HCT116 (cell line): ENCODE measurements at regions of chrX and their contacts with region 1.

Region 1: GRCh38 chrX:14029425-14030173 is at the start of gene GEMIN8:
- DNase-seq: peak; percentile 84
- ATAC-seq: peak; percentile 91
- H3K4me3 ChIP-seq: peak within 1 kb of the TSS; percentile 64 to 69
- H3K27ac ChIP-seq: peak within 1 kb of the TSS; percentile 82
- H3K4me1 ChIP-seq: peaks cover 16 to 22% of the 10 kb centered on the region in 2 experiments
- H3K27me3 ChIP-seq: no peaks in the 10 kb centered on the region
- CTCF ChIP-seq: no peak
- POLR2A ChIP-seq: no peak
- RAD21 ChIP-seq: no peak
- total RNA-seq, gene GEMIN8: 11.3 TPM

Region 2: GRCh38 chrX:12701628-12702027 is 1328.0 kb before region 1 on chrX:
- CTCF ChIA-PET with region 1: no interaction called
- POLR2A ChIA-PET with region 1: no interaction called
- RAD21 ChIA-PET with region 1: no interaction called
- intact Hi-C with region 1: loop called (anchors 5 kb)
- DNase-seq: peak; percentile 62
- ATAC-seq: peak; percentile 91
- H3K4me3 ChIP-seq: no peak overlapping the region
- H3K27ac ChIP-seq: no peak overlapping the region
- H3K4me1 ChIP-seq: no peaks in the 10 kb centered on the region
- H3K27me3 ChIP-seq: 0 out of 2 replicates have a peak, but pooled peaks cover 3% of the 10 kb centered on the region
- CTCF ChIP-seq: peak; percentile 42 to 58 (median 52); a peak in 5 of 6 replicates
- POLR2A ChIP-seq: no peak
- RAD21 ChIP-seq: peak; percentile 69

Region 3: GRCh38 chrX:12946838-12947544 is 1082.6 kb before region 1 on chrX:
- CTCF ChIA-PET with region 1: no interaction called
- POLR2A ChIA-PET with region 1: no interaction called
- RAD21 ChIA-PET with region 1: no interaction called
- intact Hi-C with region 1: loop called (anchors 10 kb)
- DNase-seq: peak; percentile 60
- ATAC-seq: peak; percentile 78
- H3K4me3 ChIP-seq: no peak overlapping the region
- H3K27ac ChIP-seq: peak overlapping the region; percentile 37
- H3K4me1 ChIP-seq: peaks cover 9 to 11% of the 10 kb centered on the region in 2 experiments; a peak in 3 of 4 replicates
- H3K27me3 ChIP-seq: no peaks in the 10 kb centered on the region
- CTCF ChIP-seq: peak; percentile 90 to 99 (median 94)
- POLR2A ChIP-seq: no peak
- RAD21 ChIP-seq: peak; percentile 87

Region 4: DNA sequence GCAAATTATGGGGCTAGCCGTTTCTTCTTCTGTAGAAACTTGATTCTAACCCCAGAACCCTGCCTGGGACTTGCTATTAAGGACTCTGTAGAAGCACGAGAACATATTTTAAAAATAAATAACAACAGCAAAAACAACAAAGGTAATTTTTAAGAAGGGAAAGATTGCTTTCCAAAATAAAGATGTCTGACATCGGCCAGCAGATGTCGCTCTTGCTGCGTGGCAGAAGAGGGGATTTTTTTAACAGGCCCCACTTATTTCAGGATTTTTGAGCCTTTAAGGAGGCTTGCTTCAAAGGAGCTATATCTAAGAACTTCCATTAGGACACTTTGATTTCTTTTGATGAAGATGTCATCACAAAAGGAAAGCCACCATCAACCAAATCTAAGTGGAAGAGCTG is 523.0 kb before region 1 on chrX:
- CTCF ChIA-PET with region 1: interaction called, 22 read pairs
- POLR2A ChIA-PET with region 1: interaction called, 3 read pairs
- RAD21 ChIA-PET with region 1: interaction called in 1 of 2 experiments, 4 read pairs
- intact Hi-C with region 1: loop called (anchors 1 kb)
- DNase-seq: peak; percentile 28
- ATAC-seq: no peak
- H3K4me3 ChIP-seq: no peak overlapping the region
- H3K27ac ChIP-seq: no peak overlapping the region
- H3K4me1 ChIP-seq: no peaks in the 10 kb centered on the region
- H3K27me3 ChIP-seq: no peaks in the 10 kb centered on the region
- CTCF ChIP-seq: peak; percentile 51 to 67 (median 65); a peak in 5 of 6 replicates
- POLR2A ChIP-seq: no peak
- RAD21 ChIP-seq: peak; percentile 84

Region 5: GRCh38 chrX:13653022-13653693 is 376.4 kb before region 1 on chrX and contains the start of gene TCEANC:
- CTCF ChIA-PET with region 1: no interaction called
- POLR2A ChIA-PET with region 1: no interaction called
- RAD21 ChIA-PET with region 1: no interaction called
- intact Hi-C with region 1: loop called (anchors 2 kb)
- DNase-seq: peak; percentile 90
- ATAC-seq: peak; percentile 96
- H3K4me3 ChIP-seq: peak within 1 kb of the TSS; percentile 53 to 67
- H3K27ac ChIP-seq: peak within 1 kb of the TSS; percentile 88
- H3K4me1 ChIP-seq: peaks cover 8 to 18% of the 10 kb centered on the region in 2 experiments
- H3K27me3 ChIP-seq: no peaks in the 10 kb centered on the region
- CTCF ChIP-seq: no peak
- POLR2A ChIP-seq: peak; percentile 25
- RAD21 ChIP-seq: no peak
- total RNA-seq, gene TCEANC: 1.2 TPM

Region 6: GRCh38 chrX:13750204-13750603 is 279.4 kb before region 1 on chrX:
- CTCF ChIA-PET with region 1: interaction called, 5 read pairs
- POLR2A ChIA-PET with region 1: interaction called, 3 read pairs
- RAD21 ChIA-PET with region 1: no interaction called
- intact Hi-C with region 1: loop called (anchors 1 kb)
- DNase-seq: peak; percentile 13
- ATAC-seq: peak; percentile 72
- H3K4me3 ChIP-seq: no peak overlapping the region
- H3K27ac ChIP-seq: no peak overlapping the region
- H3K4me1 ChIP-seq: no peaks in the 10 kb centered on the region
- H3K27me3 ChIP-seq: no peaks in the 10 kb centered on the region
- CTCF ChIP-seq: peak; percentile 22 to 53 (median 48); a peak in 4 of 6 replicates
- POLR2A ChIP-seq: no peak
- RAD21 ChIP-seq: peak; percentile 51

Region 7: DNA sequence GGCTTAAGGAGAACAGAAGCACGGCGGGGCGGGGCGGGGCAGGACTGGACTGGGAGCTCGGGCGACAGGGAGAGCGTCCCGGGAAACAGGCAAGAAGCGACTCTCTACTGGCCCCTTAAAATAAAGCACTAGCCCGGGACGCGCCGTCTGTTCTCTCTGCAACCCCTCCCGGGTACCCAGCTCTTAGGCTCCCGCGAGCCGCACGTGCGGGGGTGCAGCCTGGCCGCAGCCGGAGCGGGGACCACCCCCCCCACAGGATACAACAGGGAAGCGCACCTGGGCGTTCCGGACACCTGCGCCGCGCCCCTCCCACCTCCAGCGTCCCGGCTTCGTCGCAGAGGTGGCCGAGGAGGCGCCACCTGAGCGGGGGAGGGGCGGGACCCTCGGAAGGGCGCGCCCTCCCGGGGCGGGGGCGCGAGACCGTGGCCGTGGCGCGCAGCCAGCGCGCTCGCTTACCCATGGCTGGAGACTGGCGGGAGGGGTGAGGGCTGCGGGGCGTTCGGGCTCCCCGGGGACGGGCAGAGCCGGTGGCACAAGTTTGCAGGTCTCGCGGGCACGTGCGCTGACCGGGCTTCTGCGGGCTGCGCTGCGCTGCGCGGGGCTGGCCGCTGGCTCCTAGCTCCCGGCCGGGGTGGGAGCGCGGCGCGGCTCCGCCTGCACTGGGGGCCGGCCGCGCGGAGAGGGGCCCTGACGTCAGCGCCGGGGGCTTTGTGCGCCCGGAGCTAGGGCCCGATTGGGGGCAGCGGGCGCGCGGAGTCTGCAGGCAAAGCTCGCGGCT is 91.4 kb before region 1 on chrX:
- CTCF ChIA-PET with region 1: no interaction called
- POLR2A ChIA-PET with region 1: no interaction called
- RAD21 ChIA-PET with region 1: no interaction called
- intact Hi-C with region 1: loop called (anchors 10 kb)
- DNase-seq: no peak
- ATAC-seq: peak; percentile 93
- H3K4me3 ChIP-seq: peak overlapping the region; percentile 41 to 54
- H3K27ac ChIP-seq: no peak overlapping the region
- H3K4me1 ChIP-seq: no peaks in the 10 kb centered on the region; a peak in 1 of 4 replicates
- H3K27me3 ChIP-seq: no peaks in the 10 kb centered on the region
- CTCF ChIP-seq: no peak
- POLR2A ChIP-seq: no peak
- RAD21 ChIP-seq: no peak

Region 8: DNA sequence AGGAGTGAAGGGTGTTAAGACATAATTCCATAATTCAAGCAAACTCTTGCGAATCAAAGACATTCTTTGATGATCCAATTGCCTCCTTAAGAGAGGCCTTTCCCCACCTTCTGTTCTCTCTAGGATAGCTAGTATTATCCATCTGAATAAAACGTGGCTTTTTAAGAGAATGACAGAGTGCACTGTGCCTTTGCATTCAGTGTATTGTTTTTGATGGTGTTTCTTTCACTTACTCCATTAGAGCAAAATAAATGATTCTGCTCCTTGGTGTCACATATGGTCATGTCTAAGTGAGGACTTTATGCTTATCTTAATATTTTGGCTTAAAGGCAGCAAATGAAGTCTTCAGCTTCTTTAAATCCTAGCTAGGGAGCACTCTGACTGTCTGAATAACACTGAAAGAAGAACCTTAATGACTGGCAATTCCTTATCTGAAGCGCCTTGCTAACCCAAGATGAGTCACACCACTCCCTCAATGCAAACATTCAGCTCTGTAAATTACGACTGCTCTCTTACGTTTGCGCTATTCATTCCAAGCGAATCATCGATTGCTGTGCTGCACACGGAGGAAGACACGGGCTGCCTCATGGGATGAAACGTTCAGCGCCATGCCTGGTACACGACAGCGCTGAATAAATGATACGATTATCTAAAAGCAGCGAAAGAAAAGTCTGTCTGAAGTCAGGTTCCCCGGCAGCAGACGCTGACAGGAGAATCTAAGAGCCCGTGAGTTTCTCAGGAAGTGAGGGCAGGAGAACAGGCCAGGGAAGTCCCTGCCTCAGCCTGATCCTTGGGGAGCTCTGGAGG is 35.2 kb after region 1 on chrX:
- CTCF ChIA-PET with region 1: no interaction called
- POLR2A ChIA-PET with region 1: no interaction called
- RAD21 ChIA-PET with region 1: no interaction called
- intact Hi-C with region 1: no loop called
- DNase-seq: peak; percentile 13
- ATAC-seq: peak; percentile 66
- H3K4me3 ChIP-seq: no peak overlapping the region
- H3K27ac ChIP-seq: no peak overlapping the region
- H3K4me1 ChIP-seq: peaks cover 0 to 8% of the 10 kb centered on the region in 2 experiments; a peak in 1 of 4 replicates
- H3K27me3 ChIP-seq: no peaks in the 10 kb centered on the region
- CTCF ChIP-seq: no peak
- POLR2A ChIP-seq: no peak
- RAD21 ChIP-seq: no peak